ENCODE measurements at regions of chr2 and their contacts with region 1.

Region 1: DNA sequence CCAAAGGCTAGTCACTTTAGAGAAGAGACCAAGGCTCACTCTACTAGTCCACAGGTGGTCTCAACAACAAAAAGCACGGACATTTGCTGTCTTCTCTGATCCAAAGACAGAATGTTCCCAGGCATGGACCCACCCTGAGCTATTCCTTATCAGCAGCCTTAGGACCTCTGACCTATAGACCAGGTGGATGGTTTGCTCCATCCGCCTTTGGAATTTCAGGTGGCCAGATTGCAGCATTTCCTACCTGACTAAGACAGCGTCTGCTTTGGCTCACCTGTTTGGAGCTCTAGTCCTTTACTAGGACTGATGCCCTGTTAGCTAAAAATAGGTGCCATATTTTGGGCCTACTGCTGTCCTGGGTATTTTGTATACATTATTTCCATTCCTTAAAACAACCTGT is 44.6 kb upstream of the LRP2 start:
- H3K4me3 ChIP-seq: no peak overlapping the region
- H3K27ac ChIP-seq: no peak overlapping the region
- H3K4me1 ChIP-seq: no peaks in the 10 kb centered on the region
- CTCF ChIP-seq: no peak

Region 2: GRCh38 chr2:169439900-169440299 is 33.0 kb after region 1 on chr2:
- CTCF ChIA-PET with region 1: interaction called, 11 read pairs
- POLR2A ChIA-PET with region 1: no interaction called
- H3K4me3 ChIP-seq: no peak overlapping the region
- H3K27ac ChIP-seq: no peak overlapping the region
- H3K4me1 ChIP-seq: 0 out of 2 replicates have a peak, but pooled peaks cover 2% of the 10 kb centered on the region
- CTCF ChIP-seq: no peak

Region 3: GRCh38 chr2:169485650-169486138 is 78.8 kb after region 1 on chr2:
- CTCF ChIA-PET with region 1: no interaction called
- POLR2A ChIA-PET with region 1: no interaction called
- H3K4me3 ChIP-seq: no peak overlapping the region
- H3K27ac ChIP-seq: no peak overlapping the region
- H3K4me1 ChIP-seq: no peaks in the 10 kb centered on the region
- CTCF ChIP-seq: no peak

Measured in HEK293 (cell line).